ENCODE measurements at regions of chr22 and their contacts with region 1.

Region 1: DNA sequence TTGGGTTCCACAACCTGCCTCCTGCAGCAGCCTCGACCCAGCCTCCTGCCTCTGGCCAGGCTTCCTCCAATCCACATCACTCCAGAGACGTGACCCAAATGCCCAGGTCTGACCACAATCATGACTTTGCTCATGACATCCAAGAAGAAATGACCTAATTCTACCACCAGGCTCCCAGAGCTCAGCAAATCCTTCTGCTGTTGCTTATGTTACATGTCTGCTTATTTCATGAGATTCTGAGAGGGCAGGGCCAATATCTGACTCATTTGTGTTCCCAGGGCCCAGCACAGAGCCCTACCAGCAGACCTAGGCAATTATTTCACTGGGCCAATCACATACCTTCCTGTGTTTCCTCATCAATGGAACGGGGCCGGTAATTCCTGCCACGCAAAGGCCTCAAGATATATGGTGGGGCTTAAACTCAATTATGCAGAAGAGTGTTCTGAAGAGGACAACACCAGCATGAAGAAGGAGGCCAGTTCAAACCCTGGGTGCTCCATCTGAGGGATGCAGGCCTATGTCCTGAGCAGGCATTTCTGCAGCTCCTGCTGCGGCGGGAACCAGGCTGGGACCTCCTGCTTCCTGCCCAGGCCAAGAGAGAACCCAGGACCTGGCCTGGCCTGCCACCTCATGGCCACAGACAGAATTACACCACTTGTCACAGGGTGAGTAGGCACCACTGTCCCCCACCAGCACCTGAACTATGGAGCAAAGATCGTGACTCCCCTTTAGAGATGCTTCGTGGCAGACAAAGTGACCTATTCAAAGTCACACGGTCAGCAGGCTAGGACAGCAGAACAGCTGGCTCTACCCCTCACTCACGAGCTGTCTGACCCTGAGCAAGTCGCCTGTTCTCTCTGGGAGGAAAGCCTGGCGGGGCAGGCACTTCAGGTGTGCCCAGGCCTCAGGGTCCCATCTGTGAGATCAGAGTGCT is 5.9 kb downstream of the CENPM start:
- DNase-seq: peak; percentile 88
- H3K4me3 ChIP-seq: no peak overlapping the region
- H3K27ac ChIP-seq: no peak overlapping the region
- H3K4me1 ChIP-seq: peaks cover 7% of the 10 kb centered on the region
- H3K27me3 ChIP-seq: no peaks in the 10 kb centered on the region
- CTCF ChIP-seq: peak; percentile 89 to 94 (median 91)
- POLR2A ChIP-seq: no peak

Region 2: GRCh38 chr22:41697126-41697775 is 243.8 kb before region 1 on chr22:
- intact Hi-C with region 1: loop called (anchors 5 kb)
- DNase-seq: peak; percentile 97
- H3K4me3 ChIP-seq: no peak overlapping the region
- H3K27ac ChIP-seq: no peak overlapping the region
- H3K4me1 ChIP-seq: peaks cover 8% of the 10 kb centered on the region
- H3K27me3 ChIP-seq: no peaks in the 10 kb centered on the region
- CTCF ChIP-seq: peak; percentile 93 to 99 (median 95)
- POLR2A ChIP-seq: no peak

Region 3: GRCh38 chr22:41822317-41823060 is 118.6 kb before region 1 on chr22:
- intact Hi-C with region 1: loop called (anchors 5 kb)
- DNase-seq: no peak
- H3K4me3 ChIP-seq: no peak overlapping the region
- H3K27ac ChIP-seq: no peak overlapping the region
- H3K4me1 ChIP-seq: peaks cover 22% of the 10 kb centered on the region
- H3K27me3 ChIP-seq: no peaks in the 10 kb centered on the region
- CTCF ChIP-seq: peak; percentile 27 to 55 (median 41)
- POLR2A ChIP-seq: no peak

Measured in testis (tissue), 5 donors.